Posterior cingulate gyrus (tissue), 11 donors: ENCODE measurements at regions of chr4 and their contacts with region 1.

Region 1: DNA sequence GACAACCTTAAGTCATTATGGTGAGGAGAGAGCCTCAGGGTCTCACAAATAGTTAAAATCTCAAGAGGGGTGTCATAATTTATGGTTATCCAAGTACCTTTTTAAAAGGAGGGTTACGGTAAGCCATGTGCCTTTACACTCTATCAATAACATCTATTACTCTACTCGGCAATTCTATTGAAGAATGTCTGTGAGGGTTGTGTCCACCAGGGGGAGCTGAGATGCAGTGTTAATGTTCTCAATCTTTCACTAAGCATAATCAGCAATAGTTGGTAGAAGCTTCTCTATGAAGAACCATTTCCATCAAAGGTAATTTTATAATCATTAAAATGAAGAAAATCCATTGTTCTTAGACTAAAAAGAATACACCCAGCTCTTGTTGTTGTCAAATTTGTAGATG is 457.4 kb downstream of the CENPC start:
- DNase-seq: peak in 3 of 10 donors; percentile 12 to 51 (median 35)

Region 2: DNA sequence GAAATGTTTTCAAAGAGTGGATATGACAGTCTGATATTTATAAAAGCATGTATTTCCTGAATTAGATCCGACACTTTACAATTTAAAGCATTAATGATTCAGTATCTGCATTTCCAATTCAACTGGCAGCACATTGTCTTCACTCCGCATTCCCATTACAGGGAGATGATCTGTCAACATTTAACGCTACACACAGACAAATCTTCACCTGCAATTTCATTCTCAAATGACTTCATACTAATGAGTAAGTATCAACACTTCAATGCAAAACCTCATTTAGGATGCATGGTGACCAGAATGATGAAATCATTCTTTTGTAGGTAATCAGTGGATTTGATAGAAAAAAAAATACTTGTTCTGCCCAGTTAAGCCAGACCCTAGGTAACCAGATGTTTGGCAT is 292.2 kb before region 1 on chr4:
- intact Hi-C with region 1: no loop called
- DNase-seq: no peak

Region 3: GRCh38 chr4:67327262-67328017 is 239.5 kb after region 1 on chr4:
- intact Hi-C with region 1: loop called (anchors 1 kb)
- DNase-seq: peak in 5 of 10 donors; percentile 11 to 61 (median 40)